ENCODE measurements at regions of chr7 and their contacts with region 1.

Region 1: DNA sequence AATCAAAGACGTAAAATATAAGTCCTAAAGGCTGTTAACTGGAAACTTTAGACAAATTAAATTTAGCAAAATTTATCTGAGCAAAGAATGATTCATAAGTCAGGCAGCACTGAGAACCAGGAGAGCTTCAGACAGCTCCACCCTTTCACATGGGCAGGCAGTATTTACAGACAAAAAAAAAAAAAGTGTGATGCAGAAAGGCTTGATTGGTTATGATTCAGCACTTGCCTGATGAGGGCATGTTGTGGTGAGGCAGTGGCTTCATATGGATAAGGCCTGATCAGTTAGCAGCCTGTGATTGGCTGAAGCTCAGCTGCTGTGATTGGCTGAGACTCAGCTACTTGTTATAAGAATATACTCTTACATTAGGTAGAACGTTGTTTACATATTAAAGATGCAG is 495.4 kb upstream of the POM121L12 start:
- DNase-seq: peak; percentile 16
- H3K4me3 Mint-ChIP-seq: no peak overlapping the region
- H3K27ac Mint-ChIP-seq: no peak overlapping the region
- H3K4me1 Mint-ChIP-seq: peaks cover 4% of the 10 kb centered on the region
- H3K27me3 Mint-ChIP-seq: no peaks in the 10 kb centered on the region
- CTCF ChIP-seq: no peak

Region 2: GRCh38 chr7:52352013-52352981 is 187.7 kb before region 1 on chr7:
- CTCF ChIA-PET with region 1: no interaction called
- POLR2A ChIA-PET with region 1: no interaction called
- intact Hi-C with region 1: no loop called
- DNase-seq: no peak
- H3K4me3 Mint-ChIP-seq: no peak overlapping the region
- H3K27ac Mint-ChIP-seq: no peak overlapping the region
- H3K4me1 Mint-ChIP-seq: peaks cover 4% of the 10 kb centered on the region
- H3K27me3 Mint-ChIP-seq: peaks cover 38% of the 10 kb centered on the region
- CTCF ChIP-seq: no peak

Region 3: DNA sequence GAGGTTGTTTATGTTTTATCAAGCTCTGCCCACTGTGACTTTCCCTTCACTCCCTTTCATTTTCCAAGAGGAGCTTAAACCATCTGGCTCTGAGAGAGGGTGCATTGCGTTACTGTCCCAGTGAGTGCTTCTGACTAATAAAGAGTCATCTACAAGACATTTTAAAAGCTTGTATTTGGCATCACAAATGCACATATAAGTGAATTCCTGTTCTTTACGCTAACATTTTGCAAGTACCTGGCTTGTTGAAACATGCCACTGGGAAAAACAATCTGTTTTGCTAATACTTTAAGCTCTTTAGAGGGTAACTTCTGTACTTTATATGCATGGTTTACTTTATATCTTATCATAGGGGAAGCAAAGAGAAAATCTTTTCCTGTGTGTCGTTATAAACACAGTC is 39.2 kb before region 1 on chr7:
- CTCF ChIA-PET with region 1: interaction called, 3 read pairs
- POLR2A ChIA-PET with region 1: interaction called, 4 read pairs
- intact Hi-C with region 1: loop called (anchors 5 kb)
- DNase-seq: peak; percentile 58
- H3K4me3 Mint-ChIP-seq: peak overlapping the region; percentile 40
- H3K27ac Mint-ChIP-seq: peak overlapping the region; percentile 80
- H3K4me1 Mint-ChIP-seq: peaks cover 32% of the 10 kb centered on the region
- H3K27me3 Mint-ChIP-seq: no peaks in the 10 kb centered on the region
- CTCF ChIP-seq: no peak

Region 4: DNA sequence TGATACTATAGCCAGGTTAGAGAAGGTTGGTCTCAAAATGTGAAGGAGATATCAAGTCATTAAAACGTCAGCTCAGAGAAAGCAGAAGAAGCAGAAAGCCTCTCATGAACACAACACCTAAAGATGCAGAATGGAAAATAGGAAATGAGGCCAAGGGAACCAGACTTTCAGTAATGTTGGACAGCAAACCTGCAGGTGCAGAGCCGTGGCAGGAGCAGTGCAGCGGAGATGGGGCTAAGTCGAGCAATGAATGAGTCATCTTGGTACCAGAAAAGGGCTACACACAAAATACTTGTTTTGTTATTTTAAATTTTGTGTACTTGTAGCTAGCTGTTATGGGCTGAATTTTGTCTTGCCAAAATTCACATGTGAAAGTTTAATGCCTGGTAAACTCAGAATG is 15.8 kb after region 1 on chr7:
- CTCF ChIA-PET with region 1: interaction called, 3 read pairs
- POLR2A ChIA-PET with region 1: no interaction called
- intact Hi-C with region 1: loop called (anchors 1 kb)
- DNase-seq: no peak
- H3K4me3 Mint-ChIP-seq: no peak overlapping the region
- H3K27ac Mint-ChIP-seq: no peak overlapping the region
- H3K4me1 Mint-ChIP-seq: peaks cover 5% of the 10 kb centered on the region
- H3K27me3 Mint-ChIP-seq: no peaks in the 10 kb centered on the region
- CTCF ChIP-seq: no peak